Mammary epithelial cell (primary cell): ENCODE measurements at regions of chr14 and their contacts with region 1.

Region 1: DNA sequence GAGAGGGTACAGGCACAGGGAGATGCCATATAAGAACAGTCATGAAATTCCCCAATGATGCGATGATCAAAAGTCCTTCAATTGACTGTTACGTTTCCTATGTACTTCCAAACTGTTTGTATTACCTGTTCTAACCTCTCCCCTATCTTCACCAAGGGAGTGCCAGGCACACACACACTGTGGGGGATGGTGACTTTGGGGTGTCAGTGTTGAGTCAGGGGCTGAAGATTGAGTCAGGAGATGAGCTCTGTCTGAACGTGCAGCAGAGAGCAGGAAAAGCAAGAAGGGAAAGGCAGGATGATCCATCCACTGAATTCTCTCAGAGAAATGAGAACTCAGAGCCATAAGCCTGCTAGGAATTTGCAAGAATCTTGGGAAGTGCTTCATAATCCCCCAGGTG is 153.4 kb downstream of the EFCAB11 start:
- DNase-seq: peak; percentile 98
- H3K4me3 ChIP-seq: no peak overlapping the region
- H3K27ac ChIP-seq: peak overlapping the region; percentile 61
- H3K4me1 ChIP-seq: peaks cover 19% of the 10 kb centered on the region
- H3K27me3 ChIP-seq: no peaks in the 10 kb centered on the region
- CTCF ChIP-seq: no peak

Region 2: GRCh38 chr14:89813617-89814031 is 12.5 kb after region 1 on chr14:
- CTCF ChIA-PET with region 1: no interaction called
- dilution Hi-C with region 1: no loop called
- in situ Hi-C with region 1: no loop called
- intact Hi-C with region 1: loop called (anchors 2 kb)
- DNase-seq: no peak
- H3K4me3 ChIP-seq: peak overlapping the region in 2 of 3 experiments; percentile 21 to 30
- H3K27ac ChIP-seq: peak overlapping the region; percentile 34
- H3K4me1 ChIP-seq: peaks cover 3% of the 10 kb centered on the region
- H3K27me3 ChIP-seq: no peaks in the 10 kb centered on the region
- CTCF ChIP-seq: no peak

Region 3: DNA sequence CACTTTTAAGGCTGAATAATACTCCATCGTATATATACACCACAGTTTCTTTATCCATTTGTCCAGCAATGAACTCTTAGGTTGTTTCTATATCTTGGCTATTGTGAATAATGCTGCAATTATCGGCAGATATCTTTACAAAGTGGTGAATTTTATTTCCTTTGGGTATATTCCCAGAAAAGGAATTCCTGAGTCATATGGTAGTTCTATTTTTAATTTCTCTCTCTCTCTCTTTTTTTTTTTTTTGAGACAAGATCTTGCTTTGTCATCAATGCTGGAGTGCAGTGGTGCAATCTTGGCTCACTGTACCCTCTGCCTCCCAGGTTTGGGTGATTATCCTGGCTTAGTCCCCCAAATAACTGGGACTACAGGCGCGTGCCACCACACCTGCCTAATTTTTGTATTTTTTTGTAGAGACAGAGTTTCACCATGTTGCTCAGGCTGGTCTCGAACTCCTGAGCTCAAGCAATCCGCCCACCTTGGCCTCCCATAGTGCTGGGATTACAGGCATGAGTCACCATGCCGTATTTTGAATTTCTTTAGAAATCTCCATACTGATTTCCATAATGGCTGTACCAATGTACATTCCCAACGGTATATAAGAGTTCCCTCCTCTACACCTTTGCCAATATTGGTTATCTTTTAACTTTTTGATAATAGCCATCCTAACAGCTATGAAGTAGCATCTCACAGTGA is 55.0 kb after region 1 on chr14:
- CTCF ChIA-PET with region 1: no interaction called
- dilution Hi-C with region 1: no loop called
- in situ Hi-C with region 1: no loop called
- intact Hi-C with region 1: loop called (anchors 2 kb)
- DNase-seq: peak; percentile 68
- H3K4me3 ChIP-seq: no peak overlapping the region
- H3K27ac ChIP-seq: no peak overlapping the region
- H3K4me1 ChIP-seq: peaks cover 10% of the 10 kb centered on the region
- H3K27me3 ChIP-seq: no peaks in the 10 kb centered on the region
- CTCF ChIP-seq: no peak

Region 4: DNA sequence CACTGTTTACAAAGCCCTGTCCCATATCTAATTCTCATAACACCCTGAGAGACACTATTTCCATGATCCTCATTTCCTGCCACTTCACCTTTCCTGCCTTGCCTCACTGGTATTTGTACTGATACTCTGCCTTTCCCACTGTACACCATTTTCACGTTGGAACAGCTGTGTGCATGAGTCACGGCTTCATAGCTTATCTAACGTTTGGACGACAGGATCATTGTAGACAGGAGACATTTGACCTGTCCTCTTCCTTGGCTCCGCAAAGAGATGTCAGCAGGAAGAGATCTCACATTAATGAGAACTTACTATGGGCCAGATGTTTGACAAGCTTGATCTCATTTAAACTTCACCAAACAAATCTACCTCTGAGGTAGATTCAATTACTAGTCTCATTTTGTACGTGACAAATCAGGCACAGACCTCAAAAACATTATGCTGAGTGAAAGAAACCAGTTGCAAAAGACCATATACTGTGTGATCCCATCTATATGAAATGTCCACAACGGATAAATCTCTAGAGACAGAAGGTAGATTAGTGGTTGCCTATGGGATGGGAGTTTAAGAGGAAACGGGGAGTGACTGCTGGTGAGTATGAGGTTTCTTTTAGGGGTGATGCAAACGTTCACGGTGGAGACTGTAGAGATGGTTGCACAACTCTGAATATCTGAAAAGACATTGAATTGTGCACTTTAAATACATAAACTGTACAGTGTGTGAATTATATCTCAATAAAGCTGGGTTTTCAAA is 331.9 kb after region 1 on chr14:
- CTCF ChIA-PET with region 1: no interaction called
- dilution Hi-C with region 1: no loop called
- in situ Hi-C with region 1: no loop called
- intact Hi-C with region 1: no loop called
- DNase-seq: no peak
- H3K4me3 ChIP-seq: no peak overlapping the region
- H3K27ac ChIP-seq: no peak overlapping the region
- H3K4me1 ChIP-seq: no peaks in the 10 kb centered on the region
- H3K27me3 ChIP-seq: no peaks in the 10 kb centered on the region
- CTCF ChIP-seq: no peak

Region 5: DNA sequence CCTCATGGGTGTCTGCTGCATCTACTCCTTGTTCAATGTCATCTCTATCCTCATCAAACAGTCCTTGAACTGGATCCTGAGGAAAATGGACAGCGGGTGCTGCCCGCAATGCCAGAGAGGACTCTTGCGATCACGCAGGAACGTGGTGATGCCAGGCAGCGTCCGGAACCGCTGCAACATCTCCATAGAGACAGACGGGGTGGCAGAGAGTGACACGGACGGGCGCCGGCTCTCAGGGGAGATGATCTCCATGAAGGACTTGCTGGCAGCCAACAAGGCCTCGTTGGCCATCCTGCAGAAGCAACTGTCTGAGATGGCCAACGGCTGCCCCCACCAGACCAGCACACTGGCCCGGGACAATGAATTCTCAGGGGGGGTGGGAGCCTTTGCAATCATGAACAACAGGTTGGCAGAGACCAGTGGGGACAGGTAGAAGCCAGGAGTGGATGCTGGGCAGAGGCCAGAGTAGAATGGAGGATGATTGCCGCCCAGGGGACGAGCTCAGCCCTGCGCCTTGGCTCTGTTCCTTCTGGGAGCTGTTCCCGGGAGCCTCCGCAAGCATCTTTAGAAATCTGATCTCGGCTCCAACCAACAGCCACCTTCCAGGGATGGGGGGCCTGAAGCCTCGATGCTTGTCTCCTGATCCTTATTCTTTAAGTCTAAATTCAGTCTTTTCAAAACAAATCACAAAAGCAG is 383.6 kb after region 1 on chr14:
- CTCF ChIA-PET with region 1: no interaction called
- dilution Hi-C with region 1: no loop called
- in situ Hi-C with region 1: no loop called
- intact Hi-C with region 1: no loop called
- DNase-seq: no peak
- H3K4me3 ChIP-seq: no peak overlapping the region
- H3K27ac ChIP-seq: no peak overlapping the region
- H3K4me1 ChIP-seq: no peaks in the 10 kb centered on the region
- H3K27me3 ChIP-seq: no peaks in the 10 kb centered on the region
- CTCF ChIP-seq: no peak